Calu3 (cell line): ENCODE measurements at regions of chr2 and their contacts with region 1.

Region 1: DNA sequence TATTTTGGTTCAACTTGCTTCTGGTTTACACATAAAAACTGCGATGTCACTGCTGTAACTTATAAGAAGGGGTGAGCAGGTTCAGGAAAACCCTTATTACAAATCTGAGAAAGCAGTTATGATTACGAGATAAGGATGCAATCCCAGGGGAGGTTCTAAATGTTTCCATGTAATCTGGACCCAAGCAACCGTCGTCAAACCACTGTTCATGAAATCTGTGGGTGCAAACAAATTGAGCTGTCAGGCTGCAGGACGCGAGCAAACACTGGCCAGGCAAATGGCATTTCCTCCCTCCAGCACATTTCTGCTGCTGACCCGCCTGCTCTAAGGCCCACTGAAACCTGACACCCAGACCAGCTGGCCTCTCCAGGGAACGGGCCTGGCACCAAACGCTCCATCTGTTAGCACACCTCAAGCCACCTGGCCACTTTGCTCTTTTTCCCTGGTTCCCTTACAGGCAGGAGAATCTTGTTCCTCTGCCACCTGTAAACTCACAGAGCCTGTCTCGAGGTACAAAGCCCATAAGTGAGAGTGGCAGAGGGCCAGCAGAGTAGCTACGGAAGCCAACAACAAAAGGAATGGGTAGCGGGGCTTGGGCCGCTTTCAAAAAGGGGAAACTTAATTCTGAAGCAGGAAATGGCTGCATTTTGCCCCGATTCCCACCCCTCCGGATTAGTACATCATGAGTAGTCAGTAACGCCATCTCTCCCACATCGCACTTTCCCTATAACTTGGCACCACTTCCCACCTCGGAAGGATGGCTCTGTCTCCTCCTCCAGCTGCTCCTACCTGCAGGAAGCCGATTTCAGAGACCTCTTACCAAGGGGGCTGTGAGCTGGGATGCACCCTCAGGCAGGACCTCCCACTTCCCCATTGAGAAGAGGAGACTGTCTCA is 26.5 kb downstream of the CRACDL start:
- DNase-seq: peak; percentile 77
- H3K4me3 Mint-ChIP-seq: peak overlapping the region; percentile 26
- H3K27ac Mint-ChIP-seq: peak overlapping the region; percentile 83
- H3K4me1 Mint-ChIP-seq: peaks cover 48% of the 10 kb centered on the region
- H3K27me3 Mint-ChIP-seq: no peaks in the 10 kb centered on the region
- CTCF ChIP-seq: no peak

Region 2: GRCh38 chr2:98869940-98870263 is 39.7 kb before region 1 on chr2:
- CTCF ChIA-PET with region 1: interaction called, 5 read pairs
- intact Hi-C with region 1: loop called (anchors 5 kb)
- DNase-seq: peak; percentile 88
- H3K4me3 Mint-ChIP-seq: peak overlapping the region; percentile 89
- H3K27ac Mint-ChIP-seq: peak overlapping the region; percentile 99
- H3K4me1 Mint-ChIP-seq: peaks cover 39% of the 10 kb centered on the region
- H3K27me3 Mint-ChIP-seq: no peaks in the 10 kb centered on the region
- CTCF ChIP-seq: no peak